HAP-1 (cell line): ENCODE measurements at regions of chr11 and their contacts with region 1.

Region 1: GRCh38 chr11:73659912-73660311 is 13.5 kb downstream of the PLEKHB1 start:
- DNase-seq: no peak
- H3K4me3 ChIP-seq: no peak overlapping the region
- H3K4me1 ChIP-seq: no peaks in the 10 kb centered on the region; the same call in 1 of the 2 replicates
- H3K27me3 ChIP-seq: no peaks in the 10 kb centered on the region

Region 2: DNA sequence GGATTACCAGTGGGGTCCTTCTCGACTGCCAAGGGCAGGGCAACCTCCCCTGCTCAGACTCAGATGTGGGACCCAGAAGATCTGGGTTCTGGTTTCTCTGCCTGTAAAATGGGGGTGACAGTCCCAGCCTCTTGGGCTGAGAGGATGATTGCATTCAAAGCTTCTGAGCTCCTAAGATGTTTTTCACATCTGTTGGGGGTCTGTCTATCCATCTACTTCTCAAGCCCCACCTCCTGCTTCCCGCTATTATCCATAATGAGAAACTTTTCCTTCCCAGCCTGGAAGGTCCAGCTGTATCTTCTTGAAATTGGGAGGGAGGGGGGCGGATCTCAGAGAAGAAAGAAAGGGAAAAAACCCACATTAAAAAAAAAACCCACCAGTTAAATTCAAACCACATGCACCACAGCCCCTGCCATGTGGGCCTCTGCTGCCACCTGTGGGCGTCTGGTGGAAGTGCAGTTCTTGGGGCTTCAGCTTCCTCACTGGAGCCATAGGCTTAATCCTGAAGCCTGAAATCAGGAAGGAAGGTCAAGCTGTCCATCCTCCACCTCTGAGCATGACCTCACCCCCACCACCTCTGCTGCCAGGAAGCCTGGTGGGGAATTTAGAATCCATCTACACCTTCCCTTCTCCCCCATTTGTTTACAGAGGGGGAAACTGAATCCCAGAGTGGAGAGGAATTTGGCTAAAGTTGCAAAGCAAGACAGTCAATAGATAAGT is 324.5 kb before region 1 on chr11:
- in situ Hi-C with region 1: no loop called
- DNase-seq: peak; percentile 61 to 92
- H3K4me3 ChIP-seq: no peak overlapping the region
- H3K4me1 ChIP-seq: peaks cover 18% of the 10 kb centered on the region
- H3K27me3 ChIP-seq: no peaks in the 10 kb centered on the region

Region 3: GRCh38 chr11:73404048-73404447 is 255.9 kb before region 1 on chr11:
- in situ Hi-C with region 1: loop called (anchors 5 kb)
- DNase-seq: peak; percentile 63 to 78
- H3K4me3 ChIP-seq: no peak overlapping the region
- H3K4me1 ChIP-seq: no peaks in the 10 kb centered on the region
- H3K27me3 ChIP-seq: no peaks in the 10 kb centered on the region

Region 4: DNA sequence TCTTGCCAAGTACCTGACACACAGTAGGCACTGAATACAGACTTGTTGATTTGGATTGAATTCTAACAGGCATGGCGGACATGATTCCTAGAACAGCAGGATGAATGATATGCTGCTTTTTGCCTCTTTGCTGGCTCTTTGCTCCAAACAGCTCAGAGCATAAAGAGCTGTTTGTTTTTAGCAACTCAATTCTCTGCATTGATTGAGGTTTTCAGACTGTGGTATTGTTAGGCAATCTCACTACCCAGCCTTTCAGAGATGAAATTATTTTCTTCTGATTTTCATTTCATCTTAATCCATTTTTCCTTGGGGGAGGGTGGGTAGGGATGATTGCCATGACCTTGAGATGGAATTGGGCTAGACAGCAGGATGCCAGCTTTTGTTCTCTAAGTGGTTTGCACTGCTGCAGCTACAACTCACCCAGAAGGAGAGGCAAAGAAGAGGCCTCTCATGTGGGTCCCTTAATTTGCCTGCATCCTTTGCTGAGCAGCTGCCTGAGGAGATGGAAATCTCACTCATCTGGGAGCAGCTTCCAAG is 196.2 kb after region 1 on chr11:
- in situ Hi-C with region 1: no loop called
- DNase-seq: no peak
- H3K4me3 ChIP-seq: no peak overlapping the region
- H3K4me1 ChIP-seq: no peaks in the 10 kb centered on the region
- H3K27me3 ChIP-seq: no peaks in the 10 kb centered on the region